ENCODE measurements at regions of chr12 and their contacts with region 1.

Region 1: DNA sequence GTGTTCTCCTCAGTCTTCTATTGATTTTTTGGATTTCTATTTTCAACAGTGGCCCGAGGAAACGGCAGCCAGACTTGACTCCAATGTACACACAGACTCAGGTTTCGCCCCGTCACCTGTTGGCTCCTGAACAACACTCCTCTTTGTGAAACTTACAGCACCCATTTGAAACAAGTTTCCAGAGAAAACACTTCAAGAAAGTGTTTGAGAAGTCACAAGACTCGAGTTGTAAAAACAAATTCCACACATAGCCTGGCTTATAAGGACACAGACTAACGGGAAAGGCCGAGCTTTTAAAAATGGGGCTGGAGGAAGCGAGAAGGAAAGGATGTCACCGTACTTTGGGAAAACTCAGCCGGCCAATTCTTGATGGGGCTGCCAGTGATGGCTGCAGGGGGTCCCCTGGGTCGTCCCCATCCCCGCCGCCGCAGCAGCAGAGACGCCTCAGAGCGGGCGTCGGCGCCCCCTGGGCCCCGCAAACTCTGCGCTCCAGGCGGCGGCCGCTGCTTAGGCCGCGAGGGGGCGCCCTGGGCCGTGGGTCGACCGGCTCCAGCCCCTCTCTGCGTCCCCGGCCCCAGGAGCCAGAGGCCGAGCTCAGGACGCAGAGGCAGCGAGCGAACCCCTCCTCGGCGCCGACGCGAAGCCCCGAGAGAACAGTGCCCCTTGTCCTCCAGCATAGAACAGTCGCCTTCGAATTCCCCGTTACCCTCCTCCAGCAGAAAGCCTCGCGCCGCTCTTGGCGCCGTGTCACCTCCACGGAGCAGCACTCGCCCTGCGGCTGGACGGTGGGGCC is 106.9 kb downstream of the PRICKLE1 start:
- DNase-seq: peak; percentile 88
- CTCF ChIP-seq: peak; percentile 98

Region 2: DNA sequence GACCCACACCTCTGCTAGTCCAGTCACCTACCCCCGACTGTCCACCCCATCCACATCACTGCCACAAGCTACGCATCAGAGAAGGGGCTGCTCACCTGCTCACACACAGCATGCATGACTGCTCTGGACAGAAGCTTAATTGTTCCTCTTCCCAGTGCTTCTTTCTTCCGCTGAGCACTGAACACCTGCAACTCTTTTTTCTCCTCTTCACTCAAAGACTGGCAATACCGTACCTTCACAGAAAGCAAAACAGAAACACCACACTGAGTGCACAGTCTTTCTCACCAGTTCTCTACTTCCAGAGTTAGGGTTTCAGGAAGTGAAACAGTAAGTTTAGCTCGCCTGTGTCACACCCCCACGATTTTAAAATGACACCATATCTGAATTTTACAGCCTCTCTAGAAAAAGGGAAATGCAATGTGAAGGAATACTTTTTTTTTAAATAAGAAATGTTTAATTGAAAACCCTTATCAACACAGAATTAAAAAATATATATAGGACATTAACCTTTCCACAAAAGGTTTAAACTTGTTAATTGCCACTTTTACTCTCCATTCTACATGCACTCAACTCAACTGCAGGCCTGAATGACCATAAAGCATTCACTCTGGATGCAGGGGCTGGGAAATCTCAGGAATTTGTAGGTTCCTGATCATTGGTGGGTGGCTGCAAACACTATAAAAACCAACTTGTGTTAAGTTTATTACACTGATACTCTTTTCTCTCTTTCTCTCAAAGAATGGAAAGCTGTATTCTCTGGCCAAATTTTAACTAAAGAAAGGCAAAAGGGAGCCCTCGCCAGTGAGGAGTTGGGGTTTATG is 13.1 kb before region 1 on chr12:
- CTCF ChIA-PET with region 1: interaction called, 85 read pairs
- POLR2A ChIA-PET with region 1: no interaction called
- DNase-seq: peak; percentile 79
- CTCF ChIP-seq: no peak

Region 3: GRCh38 chr12:42568952-42569915 is 86.6 kb after region 1 on chr12:
- CTCF ChIA-PET with region 1: interaction called, 49 read pairs
- POLR2A ChIA-PET with region 1: no interaction called
- DNase-seq: peak; percentile 40
- CTCF ChIP-seq: peak; percentile 61

Region 4: GRCh38 chr12:43282106-43282505 is 799.5 kb after region 1 on chr12:
- CTCF ChIA-PET with region 1: interaction called, 23 read pairs
- POLR2A ChIA-PET with region 1: no interaction called
- DNase-seq: no peak
- CTCF ChIP-seq: peak; percentile 34

Region 5: DNA sequence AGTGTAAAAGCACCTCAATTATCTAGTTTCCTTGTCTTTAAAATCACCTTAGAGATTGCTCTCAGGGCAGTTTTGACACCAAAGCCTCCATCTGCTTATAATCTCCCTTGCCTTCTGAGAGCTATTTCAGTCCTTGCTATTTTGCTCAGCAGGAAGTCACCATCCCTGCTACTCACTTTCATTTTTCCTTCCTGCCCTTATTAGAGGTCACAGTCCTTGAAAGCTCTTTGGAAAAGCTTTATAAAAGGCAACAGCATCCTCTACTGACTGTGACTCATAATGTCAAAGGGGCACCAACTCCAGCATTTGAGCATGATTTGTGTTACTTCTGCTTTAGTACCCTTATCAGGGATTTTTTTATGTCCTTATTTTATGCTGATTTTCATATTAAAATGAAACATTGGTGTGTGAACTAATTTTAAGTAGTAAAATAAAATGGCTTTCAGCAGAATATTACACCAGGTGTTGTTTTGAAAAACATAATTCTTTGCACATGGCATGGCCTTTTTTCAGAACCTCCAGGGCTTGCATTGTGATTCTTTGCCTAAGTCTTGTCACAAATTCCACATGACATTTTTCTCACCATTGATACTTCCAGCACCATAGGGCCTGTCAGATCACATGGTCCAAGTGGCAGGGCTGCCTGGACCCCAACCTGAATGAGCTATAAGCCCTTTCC is 856.3 kb after region 1 on chr12:
- CTCF ChIA-PET with region 1: interaction called, 13 read pairs
- POLR2A ChIA-PET with region 1: no interaction called
- DNase-seq: peak; percentile 13
- CTCF ChIP-seq: peak; percentile 64